Activated T-helper 1 cell treated with anti-CD3 and anti-CD28 coated beads, Interleukin-12 subunit alpha, Interleukin-12 subunit beta, Interleukin-2, Interleukin-4 antibody, amounts not matched to agents 30 ng/mL and 10 ng/mL and 1 ng/mL, durations not matched to agents 14 hours and 24 hours and 36 hours (primary cell): ENCODE measurements at regions of chr12 and their contacts with region 1.

Region 1: GRCh38 chr12:94149119-94149780 is 873 bp downstream of the PLXNC1 start:
- DNase-seq: peak; percentile 32
- H3K4me3 Mint-ChIP-seq: peak overlapping the region; percentile 92
- H3K27ac Mint-ChIP-seq: peak overlapping the region; percentile 55
- H3K4me1 Mint-ChIP-seq: peaks cover 44% of the 10 kb centered on the region
- H3K27me3 Mint-ChIP-seq: peaks cover 24% of the 10 kb centered on the region

Region 2: GRCh38 chr12:94172973-94173372 is 23.7 kb after region 1 on chr12:
- intact Hi-C with region 1: loop called (anchors 1 kb)
- DNase-seq: no peak
- H3K4me3 Mint-ChIP-seq: no peak overlapping the region
- H3K27ac Mint-ChIP-seq: no peak overlapping the region
- H3K4me1 Mint-ChIP-seq: peaks cover 66% of the 10 kb centered on the region
- H3K27me3 Mint-ChIP-seq: peaks cover 2% of the 10 kb centered on the region

Region 3: DNA sequence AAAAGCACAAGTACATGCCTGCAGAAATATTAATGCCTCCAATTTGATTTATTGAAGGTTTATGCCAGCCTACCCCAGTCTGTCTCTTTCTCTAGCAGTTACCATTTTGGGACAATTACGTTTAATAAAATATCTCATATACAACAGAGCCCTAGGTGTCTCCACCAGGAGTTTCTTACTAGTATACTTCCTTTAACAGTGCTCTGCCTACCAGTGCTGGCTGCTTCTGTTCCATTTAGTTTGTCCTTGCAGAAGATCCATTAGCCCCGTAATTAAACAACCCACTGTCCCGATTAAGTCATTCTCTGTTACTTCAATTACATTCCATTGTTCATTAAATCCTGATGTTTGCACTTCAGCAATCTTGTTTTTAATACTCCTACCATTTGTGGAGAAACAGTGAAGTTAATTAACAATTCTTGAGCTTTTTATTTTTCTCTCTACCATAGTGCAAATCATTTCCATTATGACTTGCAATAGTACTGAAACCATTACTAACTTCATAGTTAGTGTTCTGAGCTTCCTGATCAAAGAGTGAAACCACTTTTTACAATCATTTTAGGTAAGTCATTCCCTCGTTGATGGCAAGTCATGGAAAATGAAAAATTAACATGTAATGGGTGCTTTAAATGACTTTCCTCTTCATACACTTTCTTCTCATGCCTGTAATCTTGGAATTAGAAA is 120.2 kb after region 1 on chr12:
- intact Hi-C with region 1: loop called (anchors 1 kb)
- DNase-seq: no peak
- H3K4me3 Mint-ChIP-seq: peak overlapping the region; percentile 43
- H3K27ac Mint-ChIP-seq: peak overlapping the region; percentile 72
- H3K4me1 Mint-ChIP-seq: peaks cover 72% of the 10 kb centered on the region
- H3K27me3 Mint-ChIP-seq: no peaks in the 10 kb centered on the region

Region 4: DNA sequence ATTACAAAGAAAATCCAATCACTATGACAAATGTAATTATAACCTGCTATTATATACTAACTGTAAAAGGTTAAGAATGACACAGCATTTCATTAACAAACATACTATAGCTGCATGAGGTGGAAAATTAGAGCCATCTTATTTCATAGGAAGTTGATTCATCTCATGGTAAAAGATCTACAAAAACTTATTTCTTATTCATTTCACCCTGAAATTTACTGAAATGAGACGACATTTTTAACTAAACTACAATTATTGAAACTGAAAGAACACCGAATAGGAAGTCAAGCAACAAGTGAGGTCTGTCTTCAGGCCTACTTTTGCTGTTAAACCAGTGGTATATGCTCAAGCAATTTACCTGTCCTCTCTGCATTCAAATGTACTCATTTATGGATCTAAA is 223.2 kb after region 1 on chr12:
- intact Hi-C with region 1: loop called (anchors 2 kb)
- DNase-seq: no peak
- H3K4me3 Mint-ChIP-seq: peak overlapping the region; percentile 37
- H3K27ac Mint-ChIP-seq: peak overlapping the region; percentile 78
- H3K4me1 Mint-ChIP-seq: peaks cover 58% of the 10 kb centered on the region
- H3K27me3 Mint-ChIP-seq: no peaks in the 10 kb centered on the region

Region 5: DNA sequence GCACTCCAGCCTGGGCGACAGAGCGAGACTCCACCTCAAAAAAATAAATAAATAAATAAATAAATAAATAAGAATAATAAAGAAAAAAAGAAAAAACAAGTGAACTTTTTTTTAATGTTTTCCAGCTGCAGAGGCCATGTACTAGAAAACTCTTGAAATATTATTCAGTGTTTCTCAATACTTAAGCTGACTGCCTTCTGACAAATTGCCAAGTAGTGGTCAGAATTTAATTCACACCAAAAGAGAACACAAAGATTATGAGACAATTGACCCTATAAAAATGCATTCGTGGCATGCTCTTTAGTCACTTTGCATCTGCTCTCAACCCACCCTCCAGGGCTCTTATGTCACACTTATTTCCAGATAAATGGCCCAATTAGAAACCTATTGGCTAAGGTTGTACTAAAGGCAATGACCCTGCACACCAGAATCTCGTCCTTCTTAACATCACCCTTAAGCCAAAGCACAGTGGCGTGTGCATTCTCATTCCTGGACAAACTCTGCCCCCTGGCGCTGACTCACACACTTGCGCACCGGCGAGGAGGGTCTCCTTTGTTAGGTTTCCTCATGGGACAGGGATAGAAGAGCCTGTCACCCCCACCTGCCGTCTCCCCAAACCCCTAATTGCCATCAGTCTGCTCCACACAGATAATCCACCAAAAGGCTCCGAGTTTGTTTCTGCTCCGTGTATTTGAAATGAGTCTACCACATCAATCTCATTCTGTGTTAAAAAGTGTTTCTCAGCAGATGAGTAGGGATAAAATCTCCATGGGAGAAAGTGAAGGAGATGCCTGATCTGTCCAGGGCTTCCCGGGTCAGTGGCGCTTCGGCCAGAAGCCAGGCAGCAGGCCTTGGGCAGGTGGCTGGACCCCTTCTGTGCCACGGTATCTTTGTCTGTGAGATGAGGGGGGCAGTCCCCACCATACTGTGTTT is 383.5 kb after region 1 on chr12:
- intact Hi-C with region 1: loop called (anchors 1 kb)
- DNase-seq: peak; percentile 59
- H3K4me3 Mint-ChIP-seq: no peak overlapping the region
- H3K27ac Mint-ChIP-seq: no peak overlapping the region
- H3K4me1 Mint-ChIP-seq: peaks cover 17% of the 10 kb centered on the region
- H3K27me3 Mint-ChIP-seq: peaks cover 10% of the 10 kb centered on the region

Region 6: GRCh38 chr12:94762259-94762942 is 613.2 kb after region 1 on chr12:
- intact Hi-C with region 1: loop called (anchors 5 kb)
- DNase-seq: no peak
- H3K4me3 Mint-ChIP-seq: no peak overlapping the region
- H3K27ac Mint-ChIP-seq: no peak overlapping the region
- H3K4me1 Mint-ChIP-seq: peaks cover 16% of the 10 kb centered on the region
- H3K27me3 Mint-ChIP-seq: peaks cover 7% of the 10 kb centered on the region